ENCODE measurements at regions of chr7 and their contacts with region 1.

Region 1: DNA sequence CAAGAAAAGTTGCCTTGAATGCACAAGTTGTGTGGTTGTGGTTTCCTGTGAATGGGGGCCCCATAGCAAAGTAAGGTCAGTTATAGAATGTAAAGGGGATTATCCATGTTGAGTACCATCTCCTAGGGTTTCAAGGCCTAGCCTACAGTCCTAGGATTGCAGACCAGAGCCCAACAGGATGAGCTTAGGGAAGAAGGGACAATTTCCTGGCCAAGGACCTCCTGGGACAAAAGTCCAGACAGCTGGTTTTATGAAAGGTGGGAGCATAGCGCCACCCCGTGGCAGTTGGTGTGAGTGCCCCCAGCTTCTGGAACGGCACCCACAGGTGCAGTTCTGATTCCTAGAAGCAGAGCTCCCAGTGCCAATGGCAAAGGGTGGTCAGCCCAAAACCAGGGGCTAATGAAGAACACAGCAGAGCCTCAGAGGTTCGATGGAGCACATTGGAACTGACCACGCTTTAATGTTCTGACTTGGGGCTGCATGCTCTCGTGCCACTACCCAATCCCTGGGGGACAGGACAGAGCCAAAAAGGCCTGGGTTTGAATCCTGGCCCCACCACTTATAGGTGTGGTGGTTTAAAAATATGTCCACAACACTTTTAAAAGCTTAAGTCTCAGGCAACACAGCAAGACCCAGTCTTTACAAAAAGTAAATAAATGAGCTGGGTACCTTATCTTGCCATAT is 25.8 kb upstream of the TMEM120A start:
- DNase-seq: peak; percentile 40 to 73 (median 58)
- ATAC-seq: peak; percentile 75
- H3K4me3 ChIP-seq: no peak overlapping the region
- H3K4me3 Mint-ChIP-seq: peak overlapping the region in 1 of 10 donors; percentile 40
- H3K27ac ChIP-seq: no peak overlapping the region
- H3K27ac Mint-ChIP-seq: peak overlapping the region in 1 of 9 donors; percentile 14
- H3K4me1 ChIP-seq: peaks cover 7 to 10% of the 10 kb centered on the region in 2 donors
- H3K4me1 Mint-ChIP-seq: peaks cover 0 to 23% (median 19%) of the 10 kb centered on the region in 7 donors
- H3K27me3 ChIP-seq: no peaks in the 10 kb centered on the region
- H3K27me3 Mint-ChIP-seq: no peaks in the 10 kb centered on the region

Region 2: DNA sequence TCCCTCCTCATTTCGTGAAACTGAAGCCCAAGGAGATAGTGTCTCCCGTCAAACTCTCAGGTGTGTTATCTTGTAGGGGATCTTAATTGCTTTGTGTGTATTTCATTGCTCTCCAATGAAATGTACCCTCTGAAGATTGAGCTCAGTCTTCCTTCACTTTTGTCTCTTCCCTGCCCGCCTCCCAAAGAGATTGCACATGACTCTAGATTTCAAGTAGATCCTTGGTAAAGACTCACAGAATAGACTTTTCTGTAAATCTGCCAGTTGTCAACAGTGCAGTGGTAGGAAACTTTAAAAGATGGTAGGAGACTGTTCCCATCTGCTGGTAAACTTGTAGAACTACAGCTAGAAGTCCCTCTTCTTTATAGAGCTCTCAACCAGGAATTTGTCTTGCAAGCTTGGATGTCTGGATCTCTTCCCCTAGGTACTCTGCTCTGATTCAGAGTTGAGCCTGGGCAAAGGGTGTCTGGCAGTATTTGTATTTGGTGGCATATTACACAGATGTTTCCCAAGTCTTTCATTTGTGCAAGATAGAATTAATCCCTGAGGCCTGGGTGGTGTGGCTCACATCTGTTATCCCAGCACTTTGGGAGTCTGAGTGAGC is 257.8 kb before region 1 on chr7:
- CTCF ChIA-PET with region 1: interaction called, 4 read pairs
- POLR2A ChIA-PET with region 1: no interaction called
- intact Hi-C with region 1: loop called in 1 of 2 experiments (anchors 1 kb)
- DNase-seq: peak in 6 of 9 donors; percentile 24 to 54 (median 48)
- ATAC-seq: peak; percentile 91
- H3K4me3 ChIP-seq: no peak overlapping the region
- H3K4me3 Mint-ChIP-seq: no peak overlapping the region
- H3K27ac ChIP-seq: no peak overlapping the region
- H3K27ac Mint-ChIP-seq: no peak overlapping the region
- H3K4me1 ChIP-seq: no peaks in the 10 kb centered on the region
- H3K4me1 Mint-ChIP-seq: peaks cover 0 to 5% (median 3%) of the 10 kb centered on the region in 7 donors
- H3K27me3 ChIP-seq: no peaks in the 10 kb centered on the region
- H3K27me3 Mint-ChIP-seq: no peaks in the 10 kb centered on the region

Region 3: GRCh38 chr7:75866489-75867389 is 153.4 kb before region 1 on chr7:
- CTCF ChIA-PET with region 1: interaction called, 56 read pairs
- POLR2A ChIA-PET with region 1: interaction called, 3 read pairs
- intact Hi-C with region 1: loop called in 1 of 2 experiments (anchors 1 kb)
- DNase-seq: peak; percentile 17 to 62 (median 37)
- ATAC-seq: peak; percentile 89
- H3K4me3 ChIP-seq: no peak overlapping the region
- H3K4me3 Mint-ChIP-seq: no peak overlapping the region
- H3K27ac ChIP-seq: no peak overlapping the region
- H3K27ac Mint-ChIP-seq: no peak overlapping the region
- H3K4me1 ChIP-seq: no peaks in the 10 kb centered on the region
- H3K4me1 Mint-ChIP-seq: peaks cover 0 to 13% (median 0%) of the 10 kb centered on the region in 7 donors
- H3K27me3 ChIP-seq: no peaks in the 10 kb centered on the region
- H3K27me3 Mint-ChIP-seq: peaks cover 5 to 8% (median 7%) of the 10 kb centered on the region in 5 donors